Heart left ventricle (tissue), 16 donors: ENCODE measurements at regions of chr17 and their contacts with region 1.

Region 1: DNA sequence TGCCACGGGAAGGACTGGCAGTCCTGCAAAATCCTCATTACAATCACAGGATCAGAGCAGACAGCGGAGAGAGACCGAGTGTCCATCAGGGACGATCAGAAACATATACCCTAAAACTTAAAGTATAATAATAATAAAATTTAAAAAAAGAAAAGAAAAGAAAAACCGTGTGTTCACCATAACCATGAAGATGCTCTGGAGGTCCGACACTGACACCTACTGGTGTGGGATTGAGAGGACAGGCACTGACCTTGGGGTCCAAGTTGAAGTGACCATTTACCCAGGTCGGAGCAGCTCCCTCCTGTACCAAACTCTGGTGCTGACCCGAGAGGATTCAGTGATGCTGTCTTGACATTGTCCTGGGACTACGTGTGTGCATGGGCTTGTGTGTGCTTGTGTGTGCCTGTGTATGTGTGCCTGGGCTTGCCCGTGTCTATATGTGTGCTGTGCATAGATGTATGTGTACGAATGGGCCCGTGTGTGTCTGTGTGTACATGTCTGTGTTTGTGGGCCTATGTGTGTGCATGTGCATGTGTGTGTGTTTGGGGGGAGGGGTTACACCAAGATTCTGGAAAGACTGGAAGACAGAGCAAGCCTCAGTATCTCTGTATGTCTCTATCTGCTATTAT is 10.0 kb upstream of the CD300LD start:
- DNase-seq: peak in 1 of 5 donors; percentile 26
- ATAC-seq: no peak
- H3K4me3 ChIP-seq: no peak overlapping the region
- H3K27ac ChIP-seq: no peak overlapping the region
- H3K4me1 ChIP-seq: peaks cover 0 to 65% (median 0%) of the 10 kb centered on the region in 12 donors
- H3K27me3 ChIP-seq: peaks cover 0 to 24% (median 0%) of the 10 kb centered on the region in 9 donors
- CTCF ChIP-seq: peak; percentile 36 to 71 (median 52)
- POLR2A ChIP-seq: no peak

Region 2: DNA sequence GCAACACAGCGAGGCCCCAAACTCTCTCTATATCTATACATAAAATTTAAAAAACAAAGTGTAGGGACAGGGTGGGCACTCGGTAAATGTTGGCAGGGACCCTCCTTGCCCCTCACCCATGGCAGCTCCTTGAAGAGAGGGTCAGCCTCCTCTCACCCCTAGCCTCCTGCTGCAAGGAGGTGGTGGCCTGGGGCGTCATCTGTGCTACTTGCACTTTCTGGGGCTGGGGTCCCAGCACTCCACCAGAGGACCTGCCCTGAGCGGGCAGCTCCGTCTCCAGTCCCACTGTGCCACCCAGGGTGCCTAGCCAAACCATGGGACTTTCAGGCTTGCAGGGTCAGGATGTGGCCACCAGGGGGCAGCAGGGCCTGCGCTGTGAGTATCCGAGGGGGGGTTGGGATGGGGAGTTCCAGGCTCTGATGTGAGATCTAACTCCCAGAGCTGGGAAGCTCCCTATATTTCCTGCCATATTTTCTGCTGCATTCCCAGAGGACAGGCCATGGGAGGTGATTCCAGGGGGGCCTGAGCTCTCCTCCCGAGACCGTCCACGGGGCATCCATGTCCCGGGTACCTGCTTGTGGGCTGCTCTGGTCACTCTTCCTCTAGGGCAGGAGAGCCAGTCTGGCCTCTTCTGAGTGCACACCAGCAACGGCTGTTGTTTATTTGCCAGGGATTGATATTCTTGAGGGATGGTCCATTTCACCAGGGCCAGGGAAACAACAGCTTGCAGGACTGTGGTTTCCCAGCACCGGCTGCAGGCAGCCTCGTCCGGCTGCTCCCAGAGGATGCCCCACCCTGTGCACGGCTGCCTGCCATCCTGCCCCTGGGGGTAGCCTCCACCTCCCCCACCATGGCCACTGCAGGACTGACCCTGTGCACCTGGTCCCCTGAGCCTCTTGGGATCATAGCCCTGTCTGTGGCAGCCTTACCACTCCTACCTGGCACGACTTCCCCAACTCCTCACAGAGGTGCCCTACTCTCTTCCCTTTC is 233.7 kb before region 1 on chr17:
- intact Hi-C with region 1: loop called in 4 of 10 experiments (anchors 5 to 10 kb)
- DNase-seq: peak; percentile 70 to 85 (median 76)
- ATAC-seq: peak; percentile 64 to 86 (median 78)
- H3K4me3 ChIP-seq: peak overlapping the region in 6 of 12 donors; percentile 5 to 19 (median 14)
- H3K27ac ChIP-seq: no peak overlapping the region
- H3K4me1 ChIP-seq: peaks cover 0 to 18% (median 8%) of the 10 kb centered on the region in 12 donors
- H3K27me3 ChIP-seq: peaks cover 0 to 6% (median 0%) of the 10 kb centered on the region in 9 donors
- CTCF ChIP-seq: peak; percentile 85 to 97 (median 90)
- POLR2A ChIP-seq: no peak

Region 3: DNA sequence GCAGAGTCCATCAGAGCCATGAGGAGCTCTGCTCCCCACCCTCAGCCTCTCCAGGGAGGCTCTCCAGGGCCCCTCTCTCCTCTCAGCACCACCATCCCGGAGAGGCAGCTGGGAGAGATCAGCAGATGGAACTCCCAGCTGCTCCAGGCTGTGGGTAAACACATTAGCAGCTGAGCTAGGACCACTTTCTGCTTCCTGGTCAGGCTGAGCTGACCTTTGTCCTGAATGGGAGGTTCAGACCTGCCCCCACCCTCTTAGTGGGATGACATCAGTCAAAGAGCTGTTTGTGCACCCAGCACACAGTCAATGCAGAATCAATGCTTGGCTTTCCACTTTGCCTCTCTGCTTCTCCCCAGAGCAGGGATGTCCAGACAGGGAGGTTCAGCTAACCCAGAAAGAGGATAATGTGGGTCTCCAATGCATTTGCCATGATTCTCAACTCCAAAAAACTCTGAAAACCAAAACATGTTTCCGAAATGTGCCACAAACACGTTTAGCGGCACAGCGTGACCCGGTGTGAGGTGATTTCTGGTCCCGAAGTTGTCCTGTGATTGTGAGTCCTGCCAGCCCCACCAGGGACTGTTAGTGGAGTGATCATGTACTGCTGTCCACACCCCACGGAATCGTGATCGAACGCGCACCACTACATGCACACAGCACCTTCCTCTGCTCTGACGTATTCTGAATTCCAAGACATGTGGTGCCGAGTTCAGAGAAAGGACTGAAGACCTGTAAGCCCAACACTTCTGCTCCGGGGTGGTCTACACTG is 228.0 kb before region 1 on chr17:
- intact Hi-C with region 1: loop called in 4 of 10 experiments (anchors 5 to 10 kb)
- DNase-seq: peak in 2 of 5 donors; percentile 48 to 58
- ATAC-seq: peak in 3 of 4 donors; percentile 37 to 64 (median 60)
- H3K4me3 ChIP-seq: no peak overlapping the region
- H3K27ac ChIP-seq: peak overlapping the region in 7 of 12 donors; percentile 1 to 52 (median 23)
- H3K4me1 ChIP-seq: peaks cover 0 to 13% (median under 1%) of the 10 kb centered on the region in 12 donors
- H3K27me3 ChIP-seq: peaks cover 0 to 7% (median 0%) of the 10 kb centered on the region in 9 donors
- CTCF ChIP-seq: no peak
- POLR2A ChIP-seq: no peak

Region 4: DNA sequence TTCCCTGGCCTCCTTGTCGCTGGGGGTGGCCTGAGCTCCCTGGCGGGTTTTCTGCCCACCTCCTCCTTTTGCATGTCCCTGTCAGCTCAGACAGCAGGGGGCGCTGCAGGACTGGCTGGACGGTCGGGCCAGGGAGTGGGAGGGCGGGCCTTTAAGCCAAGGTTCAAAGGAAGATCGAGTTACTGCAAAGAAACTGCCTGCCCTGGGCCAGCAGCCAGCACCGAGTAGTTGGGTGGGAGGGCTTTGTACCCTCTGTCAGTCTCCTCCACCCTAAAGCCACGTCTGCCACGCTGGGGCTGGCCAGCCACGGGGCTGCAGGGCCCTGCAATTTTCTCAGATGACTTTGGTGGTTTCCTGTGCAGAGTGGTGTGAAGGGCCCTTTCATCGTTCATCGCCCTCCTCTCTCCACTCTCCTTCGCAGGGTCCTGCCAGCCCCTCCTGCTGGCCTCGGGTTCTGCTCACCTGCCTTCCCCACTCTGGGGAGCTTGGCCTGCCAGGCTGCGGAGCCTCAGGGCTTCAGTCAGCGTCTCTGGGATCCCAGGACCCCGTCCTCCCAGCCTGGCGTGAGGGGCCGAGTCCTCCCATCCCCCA is 222.5 kb before region 1 on chr17:
- intact Hi-C with region 1: loop called in 2 of 10 experiments (anchors 5 to 10 kb)
- DNase-seq: peak; percentile 89 to 97 (median 90)
- ATAC-seq: peak; percentile 84 to 97 (median 94)
- H3K4me3 ChIP-seq: peak overlapping the region in 7 of 12 donors; percentile 5 to 41 (median 14)
- H3K27ac ChIP-seq: peak overlapping the region in 8 of 12 donors; percentile 7 to 56 (median 28)
- H3K4me1 ChIP-seq: peaks cover 0 to 18% (median 12%) of the 10 kb centered on the region in 12 donors
- H3K27me3 ChIP-seq: peaks cover 0 to 7% (median 0%) of the 10 kb centered on the region in 9 donors
- CTCF ChIP-seq: peak; percentile 91 to 99 (median 97)
- POLR2A ChIP-seq: no peak